ENCODE measurements at regions of chr7 and their contacts with region 1.

Region 1: GRCh38 chr7:142796608-142797385 is 26.0 kb downstream of the PRSS2 start:
- DNase-seq: peak; percentile 23
- ATAC-seq: no peak
- H3K4me3 Mint-ChIP-seq: peak overlapping the region; percentile 100
- H3K27ac Mint-ChIP-seq: peak overlapping the region; percentile 97
- H3K4me1 Mint-ChIP-seq: peaks cover 52% of the 10 kb centered on the region
- H3K27me3 Mint-ChIP-seq: no peaks in the 10 kb centered on the region
- CTCF ChIP-seq: no peak

Region 2: GRCh38 chr7:142345811-142346210 is 451.0 kb before region 1 on chr7:
- CTCF ChIA-PET with region 1: no interaction called
- POLR2A ChIA-PET with region 1: interaction called, 12 read pairs
- intact Hi-C with region 1: no loop called
- DNase-seq: peak; percentile 68
- ATAC-seq: peak; percentile 81
- H3K4me3 Mint-ChIP-seq: peak overlapping the region; percentile 51
- H3K27ac Mint-ChIP-seq: peak overlapping the region; percentile 76
- H3K4me1 Mint-ChIP-seq: peaks cover 24% of the 10 kb centered on the region
- H3K27me3 Mint-ChIP-seq: no peaks in the 10 kb centered on the region
- CTCF ChIP-seq: no peak

Region 3: GRCh38 chr7:142451296-142451695 is 345.5 kb before region 1 on chr7:
- CTCF ChIA-PET with region 1: no interaction called
- POLR2A ChIA-PET with region 1: interaction called, 11 read pairs
- intact Hi-C with region 1: loop called (anchors 10 kb)
- DNase-seq: no peak
- ATAC-seq: no peak
- H3K4me3 Mint-ChIP-seq: peak overlapping the region; percentile 35
- H3K27ac Mint-ChIP-seq: no peak overlapping the region
- H3K4me1 Mint-ChIP-seq: peaks cover 10% of the 10 kb centered on the region
- H3K27me3 Mint-ChIP-seq: peaks cover 2% of the 10 kb centered on the region
- CTCF ChIP-seq: no peak

Region 4: GRCh38 chr7:142523821-142524460 is 272.9 kb before region 1 on chr7:
- CTCF ChIA-PET with region 1: no interaction called
- POLR2A ChIA-PET with region 1: interaction called, 10 read pairs
- intact Hi-C with region 1: no loop called
- DNase-seq: no peak
- ATAC-seq: no peak
- H3K4me3 Mint-ChIP-seq: no peak overlapping the region
- H3K27ac Mint-ChIP-seq: no peak overlapping the region
- H3K4me1 Mint-ChIP-seq: peaks cover 13% of the 10 kb centered on the region
- H3K27me3 Mint-ChIP-seq: no peaks in the 10 kb centered on the region
- CTCF ChIP-seq: no peak

Region 5: GRCh38 chr7:142581346-142581745 is 215.5 kb before region 1 on chr7:
- CTCF ChIA-PET with region 1: no interaction called
- POLR2A ChIA-PET with region 1: no interaction called
- intact Hi-C with region 1: no loop called
- DNase-seq: peak; percentile 36
- ATAC-seq: peak; percentile 62
- H3K4me3 Mint-ChIP-seq: peak overlapping the region; percentile 53
- H3K27ac Mint-ChIP-seq: peak overlapping the region; percentile 74
- H3K4me1 Mint-ChIP-seq: peaks cover 30% of the 10 kb centered on the region
- H3K27me3 Mint-ChIP-seq: no peaks in the 10 kb centered on the region
- CTCF ChIP-seq: no peak

Region 6: DNA sequence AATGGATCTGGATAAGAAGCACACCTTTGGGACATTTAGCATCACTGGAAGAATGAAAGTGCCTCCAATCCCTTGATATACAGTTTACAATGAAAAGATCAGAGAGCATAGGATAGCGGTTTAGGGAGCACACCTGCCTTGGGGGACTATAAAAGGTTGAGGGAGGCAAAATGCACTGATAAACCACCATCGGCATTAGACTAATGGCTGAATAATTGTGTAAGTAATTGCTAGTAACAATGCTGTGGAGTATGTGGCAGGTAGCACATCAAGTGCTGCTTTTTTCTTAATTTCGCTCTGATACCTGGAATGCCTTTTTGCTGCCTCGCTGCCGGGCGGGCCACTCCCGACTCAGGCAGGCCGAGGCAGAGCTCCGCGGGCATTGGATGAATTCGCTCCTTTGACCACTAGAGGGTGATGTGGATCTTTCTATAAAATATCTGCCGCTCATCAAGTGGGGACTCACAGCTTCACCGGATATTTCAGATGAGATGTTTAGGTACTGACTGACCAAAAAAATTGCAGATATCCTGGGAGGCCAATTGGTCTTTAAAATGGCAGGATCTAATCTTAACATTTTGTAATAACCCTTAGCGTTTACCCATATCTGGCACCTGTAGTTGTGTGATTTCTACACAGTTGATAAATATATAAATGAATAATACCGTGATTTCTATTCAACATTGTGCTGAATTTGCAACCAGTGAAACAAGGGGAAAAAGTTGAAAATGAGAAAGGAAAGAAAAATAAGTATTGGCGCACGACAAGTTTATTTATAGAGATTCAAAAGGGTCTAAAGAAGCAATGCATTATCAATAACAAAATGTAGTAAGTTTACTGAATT is 164.3 kb before region 1 on chr7:
- CTCF ChIA-PET with region 1: no interaction called
- POLR2A ChIA-PET with region 1: interaction called, 10 read pairs
- intact Hi-C with region 1: no loop called
- DNase-seq: peak; percentile 65
- ATAC-seq: peak; percentile 76
- H3K4me3 Mint-ChIP-seq: no peak overlapping the region
- H3K27ac Mint-ChIP-seq: peak overlapping the region; percentile 7
- H3K4me1 Mint-ChIP-seq: peaks cover 9% of the 10 kb centered on the region
- H3K27me3 Mint-ChIP-seq: peaks cover 8% of the 10 kb centered on the region
- CTCF ChIP-seq: peak; percentile 59

Region 7: DNA sequence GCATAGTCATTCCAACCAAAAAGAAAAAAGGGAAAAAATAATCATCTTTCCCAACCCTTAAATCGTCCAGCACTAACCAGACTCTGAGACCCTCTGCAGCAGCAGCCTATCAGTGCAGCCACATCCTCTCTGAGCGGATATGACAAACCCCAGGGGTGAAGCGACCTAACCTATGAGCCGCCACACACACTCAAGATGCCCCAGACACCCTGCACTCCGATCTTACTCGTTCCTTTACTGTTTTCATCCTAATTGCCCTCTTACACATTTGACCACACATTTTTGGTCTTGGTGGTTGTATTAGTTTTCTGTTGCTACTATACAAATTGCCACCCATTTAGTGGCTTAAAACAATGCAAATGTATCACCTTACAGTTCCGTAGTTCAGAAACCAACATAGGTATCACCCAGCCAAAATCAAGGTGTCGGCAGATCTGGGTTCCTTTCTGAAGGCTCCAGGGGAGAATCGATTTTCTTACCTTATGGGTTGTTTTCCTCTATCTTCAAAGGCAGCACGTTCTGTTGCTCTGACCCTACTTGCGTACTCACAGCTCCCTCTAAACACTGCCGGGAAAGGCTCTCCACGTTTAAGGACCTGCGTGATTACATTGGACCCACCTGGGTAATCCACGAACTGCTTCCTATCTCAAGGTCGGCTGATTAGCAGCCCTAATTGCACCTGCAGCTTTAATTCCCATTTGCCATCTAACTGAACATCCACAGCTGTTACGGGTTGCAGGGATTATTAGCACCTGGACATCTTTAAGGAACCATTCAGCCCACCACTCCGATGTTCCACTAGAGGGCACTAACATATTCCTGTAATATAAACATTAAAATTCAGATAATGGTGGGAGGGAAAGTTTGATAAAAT is 84.8 kb before region 1 on chr7:
- CTCF ChIA-PET with region 1: interaction called, 4 read pairs
- POLR2A ChIA-PET with region 1: interaction called, 42 read pairs
- intact Hi-C with region 1: no loop called
- DNase-seq: peak; percentile 62
- ATAC-seq: peak; percentile 90
- H3K4me3 Mint-ChIP-seq: peak overlapping the region; percentile 82
- H3K27ac Mint-ChIP-seq: peak overlapping the region; percentile 90
- H3K4me1 Mint-ChIP-seq: peaks cover 50% of the 10 kb centered on the region
- H3K27me3 Mint-ChIP-seq: no peaks in the 10 kb centered on the region
- CTCF ChIP-seq: peak; percentile 66

Region 8: GRCh38 chr7:142739923-142740492 is 56.8 kb before region 1 on chr7:
- CTCF ChIA-PET with region 1: no interaction called
- POLR2A ChIA-PET with region 1: no interaction called
- intact Hi-C with region 1: no loop called
- DNase-seq: no peak
- ATAC-seq: peak; percentile 47
- H3K4me3 Mint-ChIP-seq: peak overlapping the region; percentile 43
- H3K27ac Mint-ChIP-seq: peak overlapping the region; percentile 16
- H3K4me1 Mint-ChIP-seq: peaks cover 10% of the 10 kb centered on the region
- H3K27me3 Mint-ChIP-seq: no peaks in the 10 kb centered on the region
- CTCF ChIP-seq: no peak

Measured in activated CD8-positive, alpha-beta T cell treated with anti-CD3 and anti-CD28 coated beads for 36 hours (primary cell).